Heart right ventricle (tissue), 16 donors: ENCODE measurements at regions of chr4 and their contacts with region 1.

Region 1: DNA sequence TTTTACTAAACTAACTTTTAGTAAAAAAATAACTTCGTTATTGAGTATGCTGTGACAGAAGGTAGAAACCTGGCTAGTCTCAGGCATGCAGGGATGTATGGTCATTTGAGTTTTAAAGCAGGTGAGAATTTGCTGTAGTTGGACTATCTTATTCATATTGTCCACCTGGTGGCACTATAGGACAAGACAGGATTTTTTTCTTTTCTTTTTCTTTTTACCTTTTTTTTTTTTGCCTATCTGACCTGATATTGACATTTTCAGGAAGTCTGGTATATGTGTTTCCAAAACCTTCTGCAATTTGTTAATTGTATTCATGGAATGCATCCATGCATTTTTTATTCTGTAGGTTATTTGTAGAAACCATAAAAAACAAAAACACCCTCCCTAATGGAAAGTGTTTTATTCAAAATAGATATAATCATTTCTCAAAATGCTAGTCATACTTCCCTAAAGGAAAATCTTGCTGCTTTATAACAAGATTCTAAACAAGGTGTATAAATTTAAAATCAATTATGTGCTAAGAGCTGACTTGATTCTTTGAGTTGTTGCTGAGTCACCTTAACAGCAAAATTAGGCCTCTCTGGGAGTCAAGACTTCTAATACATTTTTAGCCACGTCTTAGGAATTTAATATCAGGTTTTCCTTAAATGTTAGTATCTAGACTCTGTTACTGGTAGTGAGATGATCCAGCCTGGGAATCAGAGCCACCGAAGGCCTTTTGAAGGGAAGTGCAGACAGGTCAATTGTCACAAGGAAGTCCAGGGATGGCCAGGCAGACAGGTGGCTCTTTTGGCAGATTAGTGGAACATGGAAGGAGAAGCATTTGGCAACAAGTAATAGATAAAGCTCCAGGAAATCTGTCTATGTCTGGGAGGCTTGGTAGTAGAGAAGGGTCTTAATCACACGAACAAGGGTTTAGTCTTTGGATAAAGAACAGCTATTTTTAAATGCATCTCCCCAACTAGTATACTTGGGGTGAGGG is 201.3 kb upstream of the GNPDA2 start:
- DNase-seq: no peak
- ATAC-seq: peak in 1 of 8 donors; percentile 20
- H3K4me3 ChIP-seq: no peak overlapping the region
- H3K27ac ChIP-seq: no peak overlapping the region
- H3K4me1 ChIP-seq: peaks cover 0 to 14% (median 0%) of the 10 kb centered on the region in 9 donors
- H3K27me3 ChIP-seq: no peaks in the 10 kb centered on the region
- CTCF ChIP-seq: peak; percentile 18 to 71 (median 47)

Region 2: GRCh38 chr4:45324455-45325417 is 397.0 kb after region 1 on chr4:
- intact Hi-C with region 1: loop called in 1 of 10 experiments (anchors 10 kb)
- DNase-seq: no peak
- ATAC-seq: peak in 7 of 8 donors; percentile 40 to 96 (median 78)
- H3K4me3 ChIP-seq: no peak overlapping the region
- H3K27ac ChIP-seq: no peak overlapping the region
- H3K4me1 ChIP-seq: peaks cover 0 to 5% (median 0%) of the 10 kb centered on the region in 9 donors
- H3K27me3 ChIP-seq: no peaks in the 10 kb centered on the region
- CTCF ChIP-seq: no peak

Region 3: GRCh38 chr4:45331802-45332201 is 404.1 kb after region 1 on chr4:
- intact Hi-C with region 1: loop called in 2 of 10 experiments (anchors 5 to 10 kb)
- DNase-seq: no peak
- ATAC-seq: no peak
- H3K4me3 ChIP-seq: no peak overlapping the region
- H3K27ac ChIP-seq: no peak overlapping the region
- H3K4me1 ChIP-seq: no peaks in the 10 kb centered on the region
- H3K27me3 ChIP-seq: no peaks in the 10 kb centered on the region
- CTCF ChIP-seq: no peak

Region 4: GRCh38 chr4:45442466-45442865 is 514.8 kb after region 1 on chr4:
- intact Hi-C with region 1: loop called in 7 of 10 experiments (anchors 2 to 10 kb)
- DNase-seq: no peak
- ATAC-seq: peak in 3 of 8 donors; percentile 48 to 66 (median 61)
- H3K4me3 ChIP-seq: no peak overlapping the region
- H3K27ac ChIP-seq: no peak overlapping the region
- H3K4me1 ChIP-seq: peaks cover 0 to 6% (median 0%) of the 10 kb centered on the region in 9 donors
- H3K27me3 ChIP-seq: no peaks in the 10 kb centered on the region
- CTCF ChIP-seq: peak in 8 of 9 donors; percentile 8 to 47 (median 32)

Region 5: DNA sequence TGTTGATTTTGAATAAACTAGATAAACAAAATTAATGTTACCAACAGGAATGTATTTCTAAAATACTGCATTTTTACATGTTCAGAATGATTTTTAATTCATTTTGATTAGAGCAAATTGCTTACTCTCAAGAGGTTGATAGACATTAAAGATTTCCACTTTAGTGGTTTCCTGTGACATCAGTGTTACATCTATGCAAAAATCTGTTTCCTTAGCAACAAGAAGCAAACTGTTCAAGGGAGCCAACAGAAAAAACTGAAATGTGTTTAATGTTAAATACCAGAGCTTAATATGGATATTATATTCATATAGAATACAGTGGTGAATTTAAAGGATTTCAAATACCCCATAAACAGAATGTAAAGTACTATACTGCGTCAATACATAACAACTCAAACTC is 918.3 kb after region 1 on chr4:
- intact Hi-C with region 1: no loop called
- DNase-seq: no peak
- ATAC-seq: no peak
- H3K4me3 ChIP-seq: no peak overlapping the region
- H3K27ac ChIP-seq: no peak overlapping the region
- H3K4me1 ChIP-seq: no peaks in the 10 kb centered on the region
- H3K27me3 ChIP-seq: no peaks in the 10 kb centered on the region
- CTCF ChIP-seq: no peak

Region 6: DNA sequence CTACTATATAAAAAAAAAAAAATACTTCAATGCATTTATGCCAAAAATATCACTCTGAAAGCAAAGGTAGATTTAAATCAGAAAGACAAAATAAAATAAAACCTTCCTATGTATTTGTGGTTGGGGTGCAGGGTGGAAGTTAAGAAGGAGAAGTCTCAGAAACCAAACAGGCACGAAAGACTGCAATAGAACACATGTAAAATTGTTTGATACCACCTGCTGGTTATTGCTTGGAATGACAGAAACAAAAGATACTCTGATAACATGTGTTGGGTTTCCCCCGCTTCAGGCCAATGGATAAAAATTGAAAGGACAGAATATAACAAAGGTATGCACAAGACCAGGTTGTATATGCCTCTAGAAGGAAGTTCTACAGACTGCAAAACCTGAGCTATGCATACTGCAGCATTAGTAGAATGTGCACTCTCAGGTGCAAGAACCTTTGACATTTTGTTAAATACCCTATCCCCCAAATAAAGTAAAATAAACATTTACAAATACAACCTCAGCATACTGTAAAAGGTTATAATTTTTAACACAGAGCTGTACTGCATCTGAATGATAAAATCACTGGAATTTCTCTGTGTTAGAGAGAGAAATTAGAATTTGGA is 1343.4 kb after region 1 on chr4:
- intact Hi-C with region 1: loop called in 4 of 10 experiments (anchors 5 to 10 kb)
- DNase-seq: no peak
- ATAC-seq: no peak
- H3K4me3 ChIP-seq: no peak overlapping the region
- H3K27ac ChIP-seq: no peak overlapping the region
- H3K4me1 ChIP-seq: no peaks in the 10 kb centered on the region
- H3K27me3 ChIP-seq: no peaks in the 10 kb centered on the region
- CTCF ChIP-seq: peak in 8 of 9 donors; percentile 5 to 56 (median 44)